PC-3 (cell line): ENCODE measurements at regions of chr3 and their contacts with region 1.

Region 1: GRCh38 chr3:132083583-132084279 is 48.9 kb upstream of the CPNE4 start:
- DNase-seq: peak; percentile 82
- ATAC-seq: peak; percentile 85
- H3K4me3 ChIP-seq: no peak overlapping the region
- H3K27ac ChIP-seq: no peak overlapping the region
- H3K4me1 ChIP-seq: peaks cover 21% of the 10 kb centered on the region
- H3K27me3 ChIP-seq: no peaks in the 10 kb centered on the region
- CTCF ChIP-seq: no peak

Region 2: DNA sequence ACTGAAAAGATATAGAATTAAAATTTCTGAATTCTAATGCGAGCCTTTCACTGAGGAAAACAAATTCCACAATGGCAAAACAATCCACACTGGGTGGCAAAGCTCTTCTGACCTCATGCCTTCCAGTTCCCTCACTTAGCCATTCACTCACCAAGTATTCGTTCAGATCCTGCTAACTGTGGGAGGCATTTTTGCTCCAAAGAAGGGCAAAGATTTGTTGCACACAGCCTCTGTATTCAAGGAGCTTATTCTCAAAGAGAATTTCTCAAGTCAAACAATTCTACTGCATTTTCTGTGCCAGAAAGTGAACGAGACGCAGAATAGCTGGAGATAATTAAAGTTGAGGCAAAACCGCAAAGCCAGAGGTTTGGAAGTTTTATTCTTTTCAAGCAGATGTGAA is 126.2 kb before region 1 on chr3:
- CTCF ChIA-PET with region 1: no interaction called
- POLR2A ChIA-PET with region 1: no interaction called
- intact Hi-C with region 1: no loop called
- DNase-seq: no peak
- ATAC-seq: no peak
- H3K4me3 ChIP-seq: no peak overlapping the region
- H3K27ac ChIP-seq: no peak overlapping the region
- H3K4me1 ChIP-seq: peaks cover 14% of the 10 kb centered on the region
- H3K27me3 ChIP-seq: no peaks in the 10 kb centered on the region
- CTCF ChIP-seq: no peak

Region 3: DNA sequence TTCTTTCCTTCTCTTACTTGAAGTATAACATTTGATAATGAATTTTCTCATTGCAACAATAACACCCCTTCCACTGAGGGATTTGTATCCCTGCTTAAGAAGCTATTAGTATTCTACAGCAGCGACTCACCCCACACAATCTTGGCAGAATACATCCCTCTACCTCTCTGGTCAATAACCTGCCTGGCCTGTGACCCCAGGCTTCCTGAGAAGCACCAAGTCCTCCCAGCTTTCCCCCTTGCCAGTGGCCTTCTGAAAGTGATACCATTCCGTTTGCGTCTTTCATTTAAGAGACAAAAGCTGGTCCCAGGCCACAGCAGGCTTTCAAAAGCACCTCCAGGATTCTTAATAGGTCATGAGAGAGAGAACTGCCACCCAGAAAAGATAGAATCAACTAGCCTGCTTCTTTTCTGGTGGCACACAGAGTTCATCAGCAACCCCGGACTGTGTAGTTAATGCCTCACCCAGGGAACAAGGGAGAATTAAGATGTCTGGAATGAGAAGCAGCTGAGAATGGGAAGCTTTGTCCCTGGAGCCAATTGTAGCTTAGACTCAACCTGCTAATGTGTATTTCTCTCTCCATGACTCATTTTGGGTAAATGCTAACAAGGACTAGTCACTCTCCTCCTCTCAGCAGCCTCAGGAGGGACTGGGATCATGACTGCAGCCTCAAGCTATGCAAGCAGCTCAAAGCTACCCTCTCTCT is 52.0 kb after region 1 on chr3:
- CTCF ChIA-PET with region 1: no interaction called
- POLR2A ChIA-PET with region 1: no interaction called
- intact Hi-C with region 1: loop called (anchors 10 kb)
- DNase-seq: peak; percentile 93
- ATAC-seq: peak; percentile 96
- H3K4me3 ChIP-seq: peak overlapping the region; percentile 62
- H3K27ac ChIP-seq: peak overlapping the region; percentile 100
- H3K4me1 ChIP-seq: peaks cover 38% of the 10 kb centered on the region
- H3K27me3 ChIP-seq: no peaks in the 10 kb centered on the region
- CTCF ChIP-seq: no peak